OCI-LY7 (cell line): ENCODE measurements at regions of chr3 and their contacts with region 1.

Region 1: DNA sequence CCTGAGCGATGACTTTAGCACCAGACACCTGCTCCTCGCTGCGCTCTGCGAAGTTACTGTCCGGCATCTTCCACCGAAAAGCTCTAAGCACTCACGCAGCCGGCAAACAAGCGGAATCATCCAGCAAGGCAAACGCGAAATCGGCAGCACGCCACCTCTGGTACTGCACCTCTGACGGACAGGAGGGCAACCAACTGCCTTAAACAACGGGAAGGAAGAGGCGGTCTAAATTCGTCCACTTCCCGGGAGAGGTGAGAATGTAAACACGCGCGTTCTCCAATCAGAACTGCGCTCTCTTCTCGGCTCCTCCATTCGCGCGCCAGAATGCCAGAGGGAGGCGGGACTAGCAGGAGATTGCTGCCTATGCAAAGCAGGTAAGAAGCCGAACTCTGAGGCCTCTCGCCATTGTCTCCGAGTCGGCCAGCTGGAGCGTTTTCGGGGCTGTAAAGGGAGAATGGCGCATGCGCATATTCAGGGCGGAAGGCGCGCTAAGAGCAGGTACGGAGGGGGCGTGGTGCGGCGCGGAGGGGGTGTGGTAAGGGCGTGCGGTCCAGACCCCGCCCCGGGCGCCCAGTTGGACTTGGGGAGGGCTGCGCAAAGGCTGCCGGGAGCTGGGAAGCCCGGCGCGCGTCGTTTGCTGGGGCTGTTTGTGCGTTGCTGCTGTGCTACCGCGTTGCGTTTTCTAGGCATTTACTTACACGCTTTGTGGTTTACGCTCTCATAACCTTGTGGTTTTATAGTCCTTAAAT is at the starts of genes BTD and HACL1:
- DNase-seq: peak; percentile 100
- H3K4me3 ChIP-seq: peak within 1 kb of the TSS; percentile 83
- H3K27ac ChIP-seq: peak within 1 kb of the TSS; percentile 75
- H3K4me1 ChIP-seq: peaks cover 15% of the 10 kb centered on the region
- CTCF ChIP-seq: peak; percentile 61
- total RNA-seq, gene BTD: 4.7 and 6.0 TPM in 2 replicates
- total RNA-seq, gene HACL1: 13.9 and 25.5 TPM in 2 replicates

Region 2: DNA sequence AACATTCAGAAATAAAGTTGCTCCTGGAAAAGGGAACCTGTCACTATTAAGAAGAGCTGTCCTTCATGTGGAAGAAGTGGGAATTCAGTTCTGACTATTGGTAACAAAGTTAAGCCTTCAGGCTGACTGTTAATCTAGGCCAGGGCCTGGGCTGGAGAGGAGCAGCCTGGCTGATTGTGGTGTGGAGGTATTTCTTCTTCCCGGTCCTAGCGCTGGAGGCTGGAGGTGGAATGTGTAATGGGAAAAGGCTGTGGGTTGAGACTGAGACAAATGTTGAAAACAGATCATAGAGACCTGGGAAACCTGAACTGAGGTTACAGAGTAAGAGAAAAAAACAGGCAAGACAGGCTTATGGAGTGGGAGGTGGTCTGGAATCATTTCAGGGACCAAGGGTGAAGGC is 245.4 kb before region 1 on chr3:
- CTCF ChIA-PET with region 1: no interaction called
- POLR2A ChIA-PET with region 1: no interaction called
- intact Hi-C with region 1: no loop called
- DNase-seq: no peak
- H3K4me3 ChIP-seq: no peak overlapping the region
- H3K27ac ChIP-seq: no peak overlapping the region
- H3K4me1 ChIP-seq: peaks cover 46% of the 10 kb centered on the region
- CTCF ChIP-seq: no peak

Region 3: GRCh38 chr3:15427182-15427880 is 174.2 kb before region 1 on chr3 and contains the starts of genes EAF1 and METTL6:
- CTCF ChIA-PET with region 1: no interaction called
- POLR2A ChIA-PET with region 1: no interaction called
- intact Hi-C with region 1: loop called (anchors 2 kb)
- DNase-seq: peak; percentile 90
- H3K4me3 ChIP-seq: peak within 1 kb of the TSS; percentile 96
- H3K27ac ChIP-seq: peak within 1 kb of the TSS; percentile 60
- H3K4me1 ChIP-seq: peaks cover 23% of the 10 kb centered on the region
- CTCF ChIP-seq: peak; percentile 36
- total RNA-seq, gene EAF1: 18.0 and 23.8 TPM in 2 replicates
- total RNA-seq, gene METTL6: 12.7 and 24.3 TPM in 2 replicates